ENCODE measurements at regions of chr12 and their contacts with region 1.

Region 1: DNA sequence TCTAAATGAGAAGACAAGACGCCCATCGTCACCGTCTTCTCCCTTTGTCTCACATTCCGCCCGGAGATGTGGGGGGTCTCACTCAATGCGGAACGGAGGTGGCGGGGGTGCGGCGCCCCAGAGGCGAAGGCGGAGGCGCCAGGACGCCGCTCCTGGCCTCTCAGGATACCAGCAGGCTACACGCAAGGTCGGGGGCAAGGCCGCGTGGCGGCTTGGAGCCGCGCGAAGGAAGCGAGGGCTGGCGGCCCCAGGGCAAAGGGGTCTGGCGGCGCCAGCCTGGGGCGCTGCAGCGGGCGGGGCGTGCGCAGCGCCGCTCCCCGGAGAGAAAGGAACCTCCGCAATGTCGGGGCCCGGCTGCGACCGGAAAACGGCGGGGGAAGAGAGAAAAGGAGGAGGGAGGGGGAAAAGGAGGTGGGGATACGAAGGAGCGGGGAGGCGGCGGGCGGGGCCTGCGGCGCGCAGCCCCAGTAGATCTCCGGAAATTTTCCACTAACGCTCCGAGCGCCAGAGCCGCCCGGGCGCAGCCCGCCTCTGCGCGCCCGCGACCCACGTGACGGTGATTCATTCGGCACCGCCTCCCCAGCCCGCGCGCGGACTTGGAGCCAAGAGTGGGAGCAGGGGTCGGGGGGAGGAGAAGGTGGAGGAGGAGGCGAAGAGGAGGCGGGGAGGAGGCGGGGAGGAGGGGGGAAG is 10.5 kb upstream of the SLC38A2 start:
- DNase-seq: peak; percentile 88
- CTCF ChIP-seq: peak; percentile 36

Region 2: DNA sequence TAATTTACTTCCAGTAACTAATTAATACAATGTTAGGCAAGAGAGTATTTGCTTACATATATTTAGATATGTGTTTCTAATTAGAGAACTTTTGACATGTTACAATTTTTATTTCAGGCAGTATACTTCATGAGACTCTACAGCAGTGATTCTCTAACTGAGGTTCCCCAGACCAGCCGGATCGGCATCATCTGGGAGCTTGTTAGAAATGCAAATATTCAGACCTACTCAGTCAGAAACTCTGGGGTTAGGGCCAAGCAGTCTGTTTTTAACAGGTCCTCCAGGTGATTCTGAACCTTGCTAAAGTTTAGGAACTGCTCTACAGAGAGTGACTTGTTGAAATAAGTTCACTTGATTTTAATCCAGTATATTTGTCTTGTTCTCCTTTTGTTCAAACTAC is 607.1 kb before region 1 on chr12:
- CTCF ChIA-PET with region 1: no interaction called
- POLR2A ChIA-PET with region 1: no interaction called
- DNase-seq: no peak
- CTCF ChIP-seq: no peak

Region 3: GRCh38 chr12:46372544-46373110 is 10.5 kb before region 1 on chr12 and contains the start of gene SLC38A2:
- CTCF ChIA-PET with region 1: interaction called, 4 read pairs
- POLR2A ChIA-PET with region 1: interaction called, 14 read pairs
- DNase-seq: peak; percentile 97
- CTCF ChIP-seq: no peak